ENCODE measurements at regions of chr15 and their contacts with region 1.

Region 1: DNA sequence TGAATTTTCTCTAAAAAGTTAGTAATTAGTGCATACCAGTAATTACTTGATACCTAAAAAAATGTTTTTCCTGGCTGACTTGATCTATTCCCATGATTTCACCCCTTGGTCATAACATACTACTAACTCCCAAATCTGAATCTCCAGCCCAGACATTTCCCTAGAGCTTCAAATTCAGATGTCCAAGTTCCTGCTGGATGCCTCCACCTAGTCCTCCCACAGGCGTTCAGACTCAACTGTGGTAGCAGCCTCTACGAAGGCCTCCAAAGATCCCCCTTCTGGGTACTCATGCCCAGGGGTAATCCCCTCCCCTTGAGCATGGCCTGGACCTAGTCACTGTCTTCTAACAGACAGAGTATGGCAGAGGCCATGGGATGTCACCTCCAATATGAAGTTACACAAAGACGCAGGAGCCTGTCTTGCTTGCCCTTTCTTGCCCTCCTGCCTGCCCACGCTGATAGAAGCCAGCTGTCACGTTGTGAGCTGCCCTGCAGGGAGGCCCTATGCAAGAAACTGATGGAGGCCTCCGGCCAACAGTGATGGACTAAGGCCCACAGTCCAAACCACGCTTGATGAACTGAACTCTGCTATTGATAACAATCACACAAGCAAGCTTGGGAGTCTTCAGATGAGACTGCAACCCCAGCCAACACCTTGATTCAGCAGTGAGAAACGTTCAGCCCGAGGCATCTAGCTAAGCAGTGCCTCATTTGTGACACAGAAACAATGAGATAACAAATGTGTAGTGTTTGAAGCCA is 8.6 kb upstream of the FBN1 start:
- DNase-seq: no peak
- H3K4me3 ChIP-seq: no peak overlapping the region
- CTCF ChIP-seq: no peak

Region 2: GRCh38 chr15:48472753-48473152 is 181.3 kb before region 1 on chr15:
- in situ Hi-C with region 1: no loop called
- DNase-seq: no peak
- H3K4me3 ChIP-seq: no peak overlapping the region
- CTCF ChIP-seq: no peak

Region 3: GRCh38 chr15:48602358-48603122 is 51.6 kb before region 1 on chr15:
- in situ Hi-C with region 1: loop called (anchors 5 kb)
- DNase-seq: peak; percentile 70
- H3K4me3 ChIP-seq: no peak overlapping the region
- CTCF ChIP-seq: no peak

Region 4: GRCh38 chr15:48794697-48795134 is 140.6 kb after region 1 on chr15:
- in situ Hi-C with region 1: no loop called
- DNase-seq: no peak
- H3K4me3 ChIP-seq: no peak overlapping the region
- CTCF ChIP-seq: no peak